ENCODE measurements at regions of chr13 and their contacts with region 1.

Region 1: GRCh38 chr13:110705826-110706569 is at the start of gene CARS2:
- DNase-seq: peak; percentile 99
- H3K4me3 ChIP-seq: peak within 1 kb of the TSS; percentile 68 to 88 (median 78)
- H3K27ac ChIP-seq: peak within 1 kb of the TSS; percentile 79 to 91 (median 87)
- H3K4me1 ChIP-seq: peaks cover 17 to 50% (median 45%) of the 10 kb centered on the region in 4 donors
- H3K27me3 ChIP-seq: no peaks in the 10 kb centered on the region
- CTCF ChIP-seq: peak in 2 of 3 experiments; percentile 23 to 26
- EP300 ChIP-seq: no peak
- POLR2A ChIP-seq: peak; percentile 26
- total RNA-seq, gene CARS2: 32.9 to 56.9 (median 40.2) TPM

Region 2: GRCh38 chr13:109728791-109729731 is 976.9 kb before region 1 on chr13:
- intact Hi-C with region 1: no loop called
- DNase-seq: no peak
- H3K4me3 ChIP-seq: no peak overlapping the region
- H3K27ac ChIP-seq: no peak overlapping the region
- H3K4me1 ChIP-seq: peaks cover 0 to 5% (median 0%) of the 10 kb centered on the region in 4 donors
- H3K27me3 ChIP-seq: peaks cover 0 to 5% (median 0%) of the 10 kb centered on the region in 4 donors
- CTCF ChIP-seq: no peak
- EP300 ChIP-seq: no peak
- POLR2A ChIP-seq: no peak

Region 3: DNA sequence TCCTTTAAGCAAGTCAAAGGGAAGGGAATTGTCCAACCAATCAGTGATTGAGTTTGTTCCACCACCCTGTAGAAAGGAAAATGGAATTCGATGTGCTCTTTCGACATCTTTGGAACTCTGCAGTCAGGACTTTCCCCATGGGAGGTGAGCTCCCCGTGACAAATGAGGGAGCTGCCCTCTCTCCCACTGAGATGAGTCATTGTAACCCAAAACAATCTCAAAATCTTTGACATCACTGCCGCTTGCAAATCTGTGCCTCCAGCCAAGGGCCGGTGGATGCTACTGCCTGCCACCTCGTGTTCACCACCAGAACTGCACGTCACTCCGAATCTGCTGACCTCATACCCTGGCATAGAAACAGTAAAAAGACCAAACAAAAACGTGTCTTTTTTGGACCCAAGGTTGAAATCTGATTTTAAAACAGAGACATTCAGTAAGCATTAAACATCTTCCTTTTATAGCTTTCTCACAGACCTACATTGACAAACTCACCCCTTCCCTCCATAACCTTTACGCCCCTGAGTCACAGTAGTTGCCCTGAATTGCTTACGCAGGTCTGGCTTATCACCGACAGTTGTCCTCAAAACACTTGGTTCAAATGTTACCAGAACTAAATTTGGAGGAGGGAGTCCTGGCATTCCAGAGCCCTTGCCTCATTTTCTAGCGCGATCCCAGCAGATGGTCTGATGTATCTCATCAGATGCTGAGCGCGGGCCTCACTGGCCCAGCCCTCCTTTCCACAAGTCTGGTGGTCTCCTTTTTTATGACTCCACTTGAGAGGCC is 293.7 kb before region 1 on chr13:
- intact Hi-C with region 1: no loop called
- DNase-seq: peak; percentile 97
- H3K4me3 ChIP-seq: no peak overlapping the region
- H3K27ac ChIP-seq: peak overlapping the region; percentile 86 to 98 (median 92)
- H3K4me1 ChIP-seq: peaks cover 81 to 95% (median 92%) of the 10 kb centered on the region in 4 donors
- H3K27me3 ChIP-seq: no peaks in the 10 kb centered on the region
- CTCF ChIP-seq: peak; percentile 91 to 98 (median 94)
- EP300 ChIP-seq: peak; percentile 89
- POLR2A ChIP-seq: no peak

Region 4: DNA sequence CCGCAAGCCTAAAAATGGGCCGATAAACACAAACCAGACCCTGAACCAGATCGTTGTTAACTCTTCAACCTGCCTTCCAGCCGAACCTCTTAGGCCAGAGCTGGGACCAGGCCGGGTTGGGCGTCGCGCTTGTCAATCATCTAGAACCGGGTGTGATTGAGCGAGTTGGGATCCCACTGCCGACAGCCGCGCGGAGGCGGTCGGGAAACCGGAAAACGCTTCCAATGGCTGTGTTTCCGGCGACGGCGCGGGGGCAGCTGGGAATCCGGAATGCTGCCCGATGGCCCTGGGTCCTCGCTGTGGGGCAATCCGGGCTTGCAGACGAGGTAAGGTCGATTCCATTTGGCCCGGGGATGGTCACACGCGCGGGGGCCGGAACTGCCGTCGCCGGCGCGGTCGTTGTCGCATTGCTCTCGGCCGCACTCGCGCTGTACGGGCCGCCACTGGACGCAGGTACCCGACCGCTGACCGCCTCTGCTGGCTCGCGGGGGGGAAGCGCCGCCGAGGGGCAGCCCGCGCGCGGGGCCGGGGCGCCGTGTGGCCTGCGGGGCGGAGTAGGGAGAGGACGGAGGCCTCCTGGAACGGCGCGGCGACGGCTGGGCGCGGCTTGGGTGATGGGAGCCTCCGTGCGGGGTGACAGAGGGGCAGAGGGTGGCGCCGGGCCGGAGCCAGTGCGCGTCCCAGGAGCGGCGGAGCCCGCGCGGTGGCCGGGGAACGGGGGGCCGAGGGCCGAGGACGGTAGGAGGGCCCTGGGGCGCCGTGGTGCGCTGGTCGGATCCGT is 90.5 kb before region 1 on chr13 and contains the start of gene NAXD:
- intact Hi-C with region 1: loop called (anchors 5 kb)
- DNase-seq: peak; percentile 97
- H3K4me3 ChIP-seq: peak within 1 kb of the TSS; percentile 75 to 95 (median 81)
- H3K27ac ChIP-seq: peak within 1 kb of the TSS; percentile 92 to 98 (median 94)
- H3K4me1 ChIP-seq: peaks cover 27 to 50% (median 49%) of the 10 kb centered on the region in 4 donors
- H3K27me3 ChIP-seq: peaks cover 0 to 3% (median 0%) of the 10 kb centered on the region in 4 donors
- CTCF ChIP-seq: peak in 1 of 3 experiments; percentile 25
- EP300 ChIP-seq: no peak
- POLR2A ChIP-seq: peak; percentile 24
- total RNA-seq, gene NAXD: 29.9 to 34.5 (median 34.0) TPM